AG04449 (cell line): ENCODE measurements at regions of chr17 and their contacts with region 1.

Region 1: GRCh38 chr17:43483674-43484372 is at the start of gene DHX8:
- DNase-seq: peak; percentile 98
- H3K4me3 ChIP-seq: peak within 1 kb of the TSS; percentile 96
- CTCF ChIP-seq: peak; percentile 100

Region 2: GRCh38 chr17:43360739-43361505 is 122.9 kb before region 1 on chr17:
- CTCF ChIA-PET with region 1: interaction called, 4 read pairs
- POLR2A ChIA-PET with region 1: interaction called, 18 read pairs
- DNase-seq: peak; percentile 99
- H3K4me3 ChIP-seq: peak overlapping the region; percentile 58
- CTCF ChIP-seq: no peak

Region 3: DNA sequence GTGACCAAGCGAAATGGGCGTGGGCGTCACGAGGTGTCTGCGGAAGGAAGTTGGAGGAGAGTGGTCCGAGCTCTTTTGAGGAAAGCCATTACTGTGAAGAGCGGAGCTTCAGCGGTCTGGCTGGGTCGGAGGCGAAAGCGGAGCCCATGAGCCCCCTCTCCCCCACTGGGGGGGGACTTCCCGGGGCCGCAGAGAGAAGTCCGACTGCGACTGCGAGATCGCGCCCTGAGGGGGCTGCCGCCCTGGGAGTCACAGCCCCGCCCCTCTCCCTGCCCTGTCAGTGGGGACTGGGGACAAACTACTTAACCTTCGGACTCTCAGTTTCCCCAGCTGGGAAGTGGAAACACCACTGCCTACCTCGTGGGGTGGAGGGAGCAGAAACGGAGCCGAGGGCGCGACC is 105.1 kb before region 1 on chr17:
- CTCF ChIA-PET with region 1: interaction called, 12 read pairs
- POLR2A ChIA-PET with region 1: no interaction called
- DNase-seq: no peak
- H3K4me3 ChIP-seq: no peak overlapping the region
- CTCF ChIP-seq: no peak

Region 4: GRCh38 chr17:43393944-43394482 is 89.8 kb before region 1 on chr17:
- CTCF ChIA-PET with region 1: interaction called, 1,137 read pairs
- POLR2A ChIA-PET with region 1: interaction called, 83 read pairs
- DNase-seq: no peak
- H3K4me3 ChIP-seq: no peak overlapping the region
- CTCF ChIP-seq: peak; percentile 70

Region 5: DNA sequence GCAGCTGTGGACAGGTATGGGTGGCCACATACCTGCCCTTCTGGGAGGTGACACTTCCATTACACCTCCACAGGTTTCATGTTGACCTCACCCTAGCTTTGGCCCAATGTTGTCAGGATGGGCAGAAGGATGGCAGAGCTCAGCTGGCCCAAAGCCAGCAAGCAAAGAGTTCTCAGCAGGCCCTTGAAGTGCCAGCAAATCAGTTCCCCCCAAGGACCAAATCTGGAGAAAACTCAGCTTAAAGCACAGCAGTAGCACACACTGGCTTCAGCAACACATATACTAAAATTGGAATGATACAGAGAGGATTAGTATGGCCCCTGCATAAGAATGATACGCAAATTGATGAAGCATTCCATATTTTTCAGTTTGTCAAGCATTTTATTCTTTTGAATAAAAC is 71.7 kb before region 1 on chr17:
- CTCF ChIA-PET with region 1: interaction called, 1,137 read pairs
- POLR2A ChIA-PET with region 1: no interaction called
- DNase-seq: no peak
- H3K4me3 ChIP-seq: no peak overlapping the region
- CTCF ChIP-seq: no peak

Region 6: GRCh38 chr17:43461185-43461584 is 22.6 kb before region 1 on chr17:
- CTCF ChIA-PET with region 1: interaction called, 11 read pairs
- POLR2A ChIA-PET with region 1: no interaction called
- DNase-seq: no peak
- H3K4me3 ChIP-seq: no peak overlapping the region
- CTCF ChIP-seq: no peak